ENCODE measurements at regions of chr14 and their contacts with region 1.

Region 1: DNA sequence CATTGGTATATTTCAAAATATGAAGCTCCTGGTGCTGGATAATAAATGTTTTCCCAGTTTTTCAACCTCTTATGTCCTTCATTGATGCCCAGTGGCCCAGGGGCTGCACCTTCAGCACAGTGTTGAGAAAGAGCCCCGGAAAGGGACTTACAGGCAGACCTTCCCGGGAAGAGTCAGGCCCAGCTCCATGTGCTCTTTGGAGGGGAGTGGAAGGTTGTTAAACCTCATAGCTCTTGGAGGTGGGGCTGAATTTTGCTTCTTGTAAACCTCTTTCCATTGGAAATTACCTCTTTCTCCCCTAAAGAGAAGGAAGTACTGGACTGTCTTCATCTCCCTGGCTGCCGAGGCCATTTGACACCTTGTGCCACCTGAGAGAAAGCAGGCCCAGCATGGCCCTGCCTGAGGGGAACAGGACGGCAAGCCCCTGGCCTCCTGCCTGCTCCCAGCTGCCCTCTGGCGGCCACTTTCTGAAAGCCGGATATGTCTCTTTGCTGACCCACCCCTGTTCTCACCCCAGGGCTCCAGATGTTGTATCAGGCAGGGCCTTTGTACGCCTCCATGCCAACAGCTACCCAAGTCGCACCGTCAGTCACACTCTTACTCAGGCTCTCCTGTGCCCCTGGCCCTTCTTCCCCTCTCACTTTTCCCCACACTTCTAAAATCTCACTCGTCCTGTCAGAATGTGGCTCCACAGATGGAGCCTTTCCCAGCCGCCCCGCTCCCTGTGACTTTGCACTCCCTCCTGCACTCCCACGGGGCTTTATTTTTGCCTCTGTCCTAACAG is 43.0 kb downstream of the EVL start:
- DNase-seq: peak; percentile 89
- ATAC-seq: peak; percentile 66
- H3K4me3 Mint-ChIP-seq: no peak overlapping the region
- H3K27ac Mint-ChIP-seq: peak overlapping the region; percentile 86
- H3K4me1 Mint-ChIP-seq: peaks cover 82% of the 10 kb centered on the region
- H3K27me3 Mint-ChIP-seq: no peaks in the 10 kb centered on the region

Region 2: DNA sequence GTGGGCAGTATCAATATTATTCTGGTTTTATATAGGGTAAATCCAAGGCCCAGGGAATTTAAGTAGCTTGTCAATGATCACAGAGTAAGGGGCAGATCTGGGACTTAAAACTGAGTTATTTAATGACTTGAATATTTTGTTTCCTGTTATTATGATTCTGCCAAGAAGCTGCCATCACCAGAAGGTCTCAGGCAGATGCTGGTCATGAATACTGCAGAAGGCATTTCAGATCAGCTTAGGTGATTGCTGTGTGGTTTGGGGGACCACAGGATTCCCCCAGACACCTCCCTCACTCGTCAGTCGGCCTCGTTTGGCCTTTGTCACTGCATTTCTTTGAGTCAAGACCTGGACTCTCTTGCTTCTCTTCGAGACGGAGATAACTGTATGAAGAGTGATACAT is 90.7 kb before region 1 on chr14:
- CTCF ChIA-PET with region 1: no interaction called
- POLR2A ChIA-PET with region 1: no interaction called
- DNase-seq: no peak
- ATAC-seq: no peak
- H3K4me3 Mint-ChIP-seq: no peak overlapping the region
- H3K27ac Mint-ChIP-seq: no peak overlapping the region
- H3K4me1 Mint-ChIP-seq: peaks cover 20% of the 10 kb centered on the region
- H3K27me3 Mint-ChIP-seq: no peaks in the 10 kb centered on the region

Region 3: DNA sequence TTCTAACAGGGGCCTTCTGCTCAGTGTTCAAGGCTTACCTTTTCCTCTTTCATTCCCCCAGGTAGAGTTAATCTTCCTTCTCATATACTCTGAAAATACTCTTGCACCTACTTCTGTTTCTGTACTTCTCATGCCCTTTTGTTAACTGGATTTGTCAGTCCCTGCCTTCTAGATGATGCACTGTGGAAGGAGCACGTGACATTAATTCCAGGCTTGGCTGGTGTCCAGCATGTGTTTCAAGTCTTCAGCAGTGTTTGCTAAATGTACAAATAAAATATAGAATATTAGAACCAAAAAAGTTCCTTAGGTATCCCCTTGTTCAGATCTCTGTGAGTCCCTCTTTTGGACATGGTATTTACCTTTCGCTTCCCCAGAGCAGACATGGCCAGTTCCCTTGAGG is 70.9 kb before region 1 on chr14:
- CTCF ChIA-PET with region 1: interaction called, 11 read pairs
- POLR2A ChIA-PET with region 1: no interaction called
- DNase-seq: no peak
- ATAC-seq: no peak
- H3K4me3 Mint-ChIP-seq: no peak overlapping the region
- H3K27ac Mint-ChIP-seq: no peak overlapping the region
- H3K4me1 Mint-ChIP-seq: peaks cover 10% of the 10 kb centered on the region
- H3K27me3 Mint-ChIP-seq: no peaks in the 10 kb centered on the region

Region 4: GRCh38 chr14:100049220-100049619 is 59.0 kb before region 1 on chr14:
- CTCF ChIA-PET with region 1: interaction called, 12 read pairs
- POLR2A ChIA-PET with region 1: no interaction called
- DNase-seq: no peak
- ATAC-seq: peak; percentile 28
- H3K4me3 Mint-ChIP-seq: no peak overlapping the region
- H3K27ac Mint-ChIP-seq: peak overlapping the region; percentile 1
- H3K4me1 Mint-ChIP-seq: peaks cover 34% of the 10 kb centered on the region
- H3K27me3 Mint-ChIP-seq: no peaks in the 10 kb centered on the region

Region 5: GRCh38 chr14:100056964-100057795 is 51.1 kb before region 1 on chr14:
- CTCF ChIA-PET with region 1: interaction called, 53 read pairs
- POLR2A ChIA-PET with region 1: interaction called, 4 read pairs
- DNase-seq: peak; percentile 40
- ATAC-seq: peak; percentile 55
- H3K4me3 Mint-ChIP-seq: no peak overlapping the region
- H3K27ac Mint-ChIP-seq: peak overlapping the region; percentile 74
- H3K4me1 Mint-ChIP-seq: peaks cover 70% of the 10 kb centered on the region
- H3K27me3 Mint-ChIP-seq: no peaks in the 10 kb centered on the region

Region 6: GRCh38 chr14:100067971-100068959 is 40.0 kb before region 1 on chr14:
- CTCF ChIA-PET with region 1: interaction called, 321 read pairs
- POLR2A ChIA-PET with region 1: interaction called, 15 read pairs
- DNase-seq: peak; percentile 95
- ATAC-seq: peak; percentile 67
- H3K4me3 Mint-ChIP-seq: peak overlapping the region; percentile 91
- H3K27ac Mint-ChIP-seq: peak overlapping the region; percentile 97
- H3K4me1 Mint-ChIP-seq: peaks cover 36% of the 10 kb centered on the region
- H3K27me3 Mint-ChIP-seq: no peaks in the 10 kb centered on the region

Region 7: DNA sequence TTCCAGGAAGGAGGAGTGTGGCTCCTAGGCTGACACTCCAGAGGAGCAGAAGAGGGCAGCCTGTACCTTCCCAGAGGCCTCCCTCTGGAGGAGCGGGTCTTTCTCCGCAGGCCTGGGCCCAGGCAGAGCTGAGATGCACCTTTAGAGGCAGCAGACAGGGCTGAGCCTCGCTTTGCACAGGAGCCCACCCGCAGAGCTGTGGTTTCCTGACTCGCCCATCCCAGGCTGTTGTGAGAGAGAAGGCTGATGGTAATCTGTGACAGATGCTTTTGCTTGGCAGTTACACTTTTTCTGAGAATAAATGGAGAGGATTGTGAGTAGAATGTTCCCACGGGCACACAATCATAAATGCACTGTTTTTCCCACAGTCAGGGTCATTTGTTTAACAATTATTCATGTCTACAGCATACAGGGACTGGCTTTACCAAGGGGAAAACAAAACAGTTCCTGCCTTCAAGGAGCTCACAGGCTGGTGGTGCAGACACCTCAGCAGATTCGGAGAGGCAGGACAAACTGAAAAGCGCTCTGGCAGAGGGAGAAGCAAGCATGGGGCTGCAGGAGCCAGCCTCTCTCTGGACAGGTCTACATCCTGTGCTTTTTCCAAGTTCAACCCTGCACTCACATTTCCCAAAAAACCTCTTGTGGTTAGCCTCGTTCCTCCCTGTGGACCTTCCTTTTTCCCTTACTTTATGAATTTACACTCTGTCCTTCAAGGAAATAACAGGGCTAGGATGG is 29.1 kb before region 1 on chr14:
- CTCF ChIA-PET with region 1: interaction called, 321 read pairs
- POLR2A ChIA-PET with region 1: interaction called, 20 read pairs
- DNase-seq: peak; percentile 94
- ATAC-seq: peak; percentile 83
- H3K4me3 Mint-ChIP-seq: peak overlapping the region; percentile 91
- H3K27ac Mint-ChIP-seq: peak overlapping the region; percentile 93
- H3K4me1 Mint-ChIP-seq: peaks cover 97% of the 10 kb centered on the region
- H3K27me3 Mint-ChIP-seq: no peaks in the 10 kb centered on the region

Region 8: GRCh38 chr14:100096570-100096971 is 11.7 kb before region 1 on chr14:
- CTCF ChIA-PET with region 1: interaction called, 13 read pairs
- POLR2A ChIA-PET with region 1: interaction called, 3 read pairs
- DNase-seq: no peak
- ATAC-seq: no peak
- H3K4me3 Mint-ChIP-seq: no peak overlapping the region
- H3K27ac Mint-ChIP-seq: peak overlapping the region; percentile 51
- H3K4me1 Mint-ChIP-seq: peaks cover 91% of the 10 kb centered on the region
- H3K27me3 Mint-ChIP-seq: no peaks in the 10 kb centered on the region

Region 9: DNA sequence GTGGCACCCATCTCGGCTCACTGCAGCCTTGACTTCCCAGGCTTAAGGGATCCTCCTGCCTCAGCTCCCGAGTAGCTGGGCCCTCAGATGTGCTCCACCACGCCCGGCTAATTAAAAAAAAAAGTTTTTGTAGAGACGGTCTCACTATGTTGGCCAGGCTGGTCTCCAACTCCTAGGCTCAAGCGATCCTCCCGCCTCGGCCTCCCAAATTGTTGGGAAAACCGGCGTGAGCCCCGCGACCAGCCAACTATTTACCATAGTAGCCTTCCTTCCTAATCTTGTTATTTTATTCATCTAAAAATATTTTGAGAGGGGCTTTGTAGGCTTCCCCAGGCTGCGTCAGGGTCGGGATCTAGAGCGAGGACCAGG is 105.3 kb after region 1 on chr14:
- CTCF ChIA-PET with region 1: no interaction called
- POLR2A ChIA-PET with region 1: no interaction called
- DNase-seq: no peak
- ATAC-seq: no peak
- H3K4me3 Mint-ChIP-seq: peak overlapping the region; percentile 80
- H3K27ac Mint-ChIP-seq: peak overlapping the region; percentile 89
- H3K4me1 Mint-ChIP-seq: peaks cover 42% of the 10 kb centered on the region
- H3K27me3 Mint-ChIP-seq: no peaks in the 10 kb centered on the region

Measured in activated CD8-positive, alpha-beta T cell treated with anti-CD3 and anti-CD28 coated beads, Interleukin-2, amount 10 ng/mL, durations not matched to agents 7 days and 5 days (primary cell).